Left ventricle myocardium inferior (tissue), 1 donor: ENCODE measurements at regions of chr16 and their contacts with region 1.

Region 1: GRCh38 chr16:14193316-14193871 is 122.3 kb downstream of the MRTFB start:
- DNase-seq: no peak
- H3K4me3 ChIP-seq: peak overlapping the region; percentile 14
- H3K27ac ChIP-seq: peak overlapping the region; percentile 10
- H3K4me1 ChIP-seq: peaks cover 63% of the 10 kb centered on the region
- H3K27me3 ChIP-seq: no peaks in the 10 kb centered on the region
- CTCF ChIP-seq: no peak

Region 2: DNA sequence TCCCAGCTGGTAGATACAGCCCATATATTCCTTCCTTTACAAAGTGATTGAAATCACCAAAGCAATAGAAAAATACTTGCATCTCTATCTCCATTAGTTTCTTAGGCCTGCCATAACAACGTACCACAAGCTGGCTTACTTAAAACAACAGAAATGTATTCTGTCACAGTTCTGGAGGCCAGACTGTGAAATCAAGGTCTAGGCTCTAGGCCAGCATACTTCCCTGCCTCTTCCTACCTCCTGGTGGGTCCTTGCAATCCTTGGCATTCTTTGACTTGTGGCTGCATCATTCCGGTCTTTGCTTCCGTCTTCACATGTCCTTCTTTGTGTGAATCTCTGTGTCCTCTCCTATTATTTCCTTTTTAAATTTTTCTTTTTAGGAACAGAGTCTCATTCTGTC is 210.9 kb before region 1 on chr16:
- intact Hi-C with region 1: no loop called
- DNase-seq: no peak
- H3K4me3 ChIP-seq: no peak overlapping the region
- H3K27ac ChIP-seq: no peak overlapping the region
- H3K4me1 ChIP-seq: no peaks in the 10 kb centered on the region
- H3K27me3 ChIP-seq: no peaks in the 10 kb centered on the region
- CTCF ChIP-seq: no peak

Region 3: DNA sequence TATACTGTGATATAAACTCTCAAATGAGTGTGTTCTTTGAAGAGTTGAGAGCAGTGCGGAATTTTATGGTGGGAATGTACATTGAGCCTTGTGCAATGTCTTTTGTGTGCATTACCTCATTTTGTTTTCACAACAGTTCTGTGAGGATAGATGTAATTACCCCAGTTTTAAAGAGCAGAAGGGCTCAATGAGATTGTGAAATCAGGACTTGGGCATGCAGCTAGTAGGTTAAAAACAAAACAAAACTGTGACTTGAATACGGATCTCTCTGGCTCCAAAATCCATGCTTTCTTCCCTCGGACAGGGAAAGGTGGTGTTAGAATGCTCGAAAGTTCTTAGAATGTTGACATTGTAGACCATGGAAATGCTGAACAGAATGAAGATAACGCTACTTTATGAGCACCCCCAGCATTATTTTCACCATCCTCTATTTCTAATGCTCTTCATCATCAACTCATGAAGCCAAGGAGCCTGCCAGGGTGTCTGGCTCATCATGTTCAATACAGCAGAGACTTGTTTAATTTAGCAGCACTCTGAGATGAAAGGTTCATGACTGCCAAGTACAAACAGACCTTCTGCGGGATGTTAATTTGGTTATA is 105.1 kb before region 1 on chr16:
- intact Hi-C with region 1: loop called (anchors 10 kb)
- DNase-seq: no peak
- H3K4me3 ChIP-seq: no peak overlapping the region
- H3K27ac ChIP-seq: peak overlapping the region; percentile 59
- H3K4me1 ChIP-seq: peaks cover 70% of the 10 kb centered on the region
- H3K27me3 ChIP-seq: no peaks in the 10 kb centered on the region
- CTCF ChIP-seq: no peak

Region 4: GRCh38 chr16:14240219-14240843 is 46.9 kb after region 1 on chr16:
- intact Hi-C with region 1: no loop called
- DNase-seq: no peak
- H3K4me3 ChIP-seq: no peak overlapping the region
- H3K27ac ChIP-seq: peak overlapping the region; percentile 61
- H3K4me1 ChIP-seq: peaks cover 23% of the 10 kb centered on the region
- H3K27me3 ChIP-seq: no peaks in the 10 kb centered on the region
- CTCF ChIP-seq: no peak